PC-9 (cell line): ENCODE measurements at regions of chr17 and their contacts with region 1.

Region 1: DNA sequence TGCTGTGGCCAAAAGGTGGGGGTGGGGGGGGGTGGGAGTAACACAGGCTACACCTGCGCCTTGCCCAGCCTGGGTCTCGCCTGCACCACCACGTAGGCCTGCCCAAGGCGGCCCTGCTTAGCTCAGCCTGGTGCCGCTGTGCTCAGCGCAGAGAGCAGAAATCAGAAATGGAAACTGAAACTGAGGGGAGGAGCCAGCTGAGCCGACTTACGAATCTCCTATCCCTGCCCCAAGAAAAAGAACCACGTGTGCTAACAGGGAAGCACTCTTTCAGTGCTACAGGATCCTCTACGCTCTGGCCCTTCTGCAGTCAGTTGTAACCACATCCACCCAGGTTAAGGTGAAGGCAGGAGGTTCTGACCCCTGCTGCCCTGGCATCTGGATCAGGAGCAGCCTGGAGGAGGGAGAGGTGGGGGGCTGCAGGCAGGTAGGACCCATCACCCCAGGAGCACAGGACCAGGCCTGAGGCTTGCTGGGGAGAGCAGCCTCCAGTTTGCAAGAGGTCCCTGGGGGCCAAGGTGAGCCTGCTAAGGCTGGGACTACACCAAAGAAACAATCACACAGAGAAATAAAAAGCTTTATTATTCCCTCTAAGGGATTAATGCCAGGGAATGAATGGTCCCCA is at the start of gene DHX58:
- DNase-seq: peak; percentile 64 to 65
- H3K4me3 ChIP-seq: peak within 1 kb of the TSS; percentile 18; the same call in 1 of the 2 replicates
- H3K27ac ChIP-seq: no peak within 1 kb of the TSS
- H3K4me1 ChIP-seq: no peaks in the 10 kb centered on the region
- H3K27me3 ChIP-seq: no peaks in the 10 kb centered on the region
- CTCF ChIP-seq: no peak
- total RNA-seq, gene DHX58: 17.9 and 26.0 TPM in 2 replicates

Region 2: GRCh38 chr17:41811549-41812380 is 300.9 kb before region 1 on chr17 and contains the start of gene P3H4:
- CTCF ChIA-PET with region 1: interaction called, 10 read pairs
- POLR2A ChIA-PET with region 1: no interaction called
- intact Hi-C with region 1: no loop called
- DNase-seq: peak; percentile 40 to 82
- H3K4me3 ChIP-seq: peak within 1 kb of the TSS; percentile 94
- H3K27ac ChIP-seq: 0 out of 2 replicates have a peak within 1 kb of the TSS, but pooled peaks have one; percentile 22
- H3K4me1 ChIP-seq: peaks cover 27% of the 10 kb centered on the region
- H3K27me3 ChIP-seq: no peaks in the 10 kb centered on the region
- CTCF ChIP-seq: peak; percentile 53; the same call in 1 of the 2 replicates
- total RNA-seq, gene P3H4: 26.8 and 34.0 TPM in 2 replicates

Region 3: GRCh38 chr17:41918314-41919164 is 194.1 kb before region 1 on chr17 and contains the start of gene ACLY:
- CTCF ChIA-PET with region 1: interaction called, 17 read pairs
- POLR2A ChIA-PET with region 1: no interaction called
- intact Hi-C with region 1: no loop called
- DNase-seq: peak; percentile 93 to 98
- H3K4me3 ChIP-seq: peak within 1 kb of the TSS; percentile 98
- H3K27ac ChIP-seq: peak within 1 kb of the TSS; percentile 80
- H3K4me1 ChIP-seq: peaks cover 38% of the 10 kb centered on the region
- H3K27me3 ChIP-seq: no peaks in the 10 kb centered on the region
- CTCF ChIP-seq: no peak
- total RNA-seq, gene ACLY: 106 and 184 TPM in 2 replicates

Region 4: DNA sequence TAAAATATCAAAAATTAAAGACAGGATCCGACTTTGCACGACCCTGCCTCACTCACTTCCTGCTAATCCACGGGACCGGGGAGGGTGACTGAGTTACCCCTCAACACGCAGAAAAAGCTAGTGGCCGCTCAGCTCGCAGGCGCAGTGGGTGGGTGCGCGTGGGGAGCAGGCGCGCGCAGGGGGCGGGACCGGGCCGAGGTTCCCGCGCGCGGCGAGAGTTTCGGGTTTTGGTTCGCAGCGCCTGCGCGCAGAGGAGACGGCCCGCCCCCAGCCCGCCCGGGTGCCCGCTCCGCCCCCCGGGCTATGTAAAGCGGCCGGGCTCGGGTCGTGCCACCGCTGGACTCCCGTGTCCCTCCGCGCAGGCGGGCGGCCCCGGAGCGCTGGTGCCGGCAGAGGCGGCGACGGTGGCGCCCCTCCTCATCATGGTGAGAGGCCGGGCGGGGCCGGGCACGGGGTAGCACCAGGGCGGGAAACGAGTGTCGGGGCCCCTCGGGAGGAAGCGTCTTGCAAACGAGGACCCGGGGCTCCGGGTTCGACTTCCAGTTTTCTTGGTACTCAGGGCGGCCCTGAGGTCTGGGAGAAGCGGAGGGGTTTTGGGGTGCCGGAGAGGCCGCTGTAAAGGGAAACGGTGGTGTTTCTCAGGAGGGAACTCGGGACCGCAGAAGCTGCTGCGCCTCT is 146.1 kb before region 1 on chr17 and contains the start of gene CNP:
- CTCF ChIA-PET with region 1: interaction called, 4 read pairs
- POLR2A ChIA-PET with region 1: interaction called, 3 read pairs
- intact Hi-C with region 1: loop called (anchors 1 kb)
- DNase-seq: peak; percentile 69 to 90
- H3K4me3 ChIP-seq: peak within 1 kb of the TSS; percentile 78
- H3K27ac ChIP-seq: peak within 1 kb of the TSS; percentile 93
- H3K4me1 ChIP-seq: peaks cover 11% of the 10 kb centered on the region
- H3K27me3 ChIP-seq: no peaks in the 10 kb centered on the region
- CTCF ChIP-seq: no peak
- total RNA-seq, gene CNP: 60.6 and 64.7 TPM in 2 replicates

Region 5: DNA sequence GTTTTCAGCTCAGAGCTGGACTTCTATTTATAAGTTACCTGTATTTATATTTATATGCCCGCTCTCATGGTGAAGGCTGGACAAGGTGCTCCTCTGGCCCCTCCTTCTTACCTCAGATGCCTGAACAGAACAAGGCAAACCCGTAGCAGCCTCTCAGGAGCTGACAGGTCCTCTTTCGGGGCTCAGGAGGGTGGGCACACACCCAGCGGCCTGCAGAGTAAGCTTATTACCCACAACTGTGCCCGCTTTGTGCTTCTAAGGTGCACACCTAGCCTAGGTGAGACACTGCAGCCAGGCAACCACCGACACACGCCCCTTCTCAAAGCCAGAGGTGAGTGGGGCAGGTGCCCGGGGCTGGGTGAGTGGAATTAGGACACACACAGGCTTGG is 87.5 kb before region 1 on chr17:
- CTCF ChIA-PET with region 1: no interaction called
- POLR2A ChIA-PET with region 1: no interaction called
- intact Hi-C with region 1: loop called (anchors 1 kb)
- DNase-seq: no peak
- H3K4me3 ChIP-seq: no peak overlapping the region
- H3K27ac ChIP-seq: peak overlapping the region; percentile 61
- H3K4me1 ChIP-seq: peaks cover 36% of the 10 kb centered on the region
- H3K27me3 ChIP-seq: no peaks in the 10 kb centered on the region
- CTCF ChIP-seq: peak; percentile 19; the same call in 1 of the 2 replicates

Region 6: DNA sequence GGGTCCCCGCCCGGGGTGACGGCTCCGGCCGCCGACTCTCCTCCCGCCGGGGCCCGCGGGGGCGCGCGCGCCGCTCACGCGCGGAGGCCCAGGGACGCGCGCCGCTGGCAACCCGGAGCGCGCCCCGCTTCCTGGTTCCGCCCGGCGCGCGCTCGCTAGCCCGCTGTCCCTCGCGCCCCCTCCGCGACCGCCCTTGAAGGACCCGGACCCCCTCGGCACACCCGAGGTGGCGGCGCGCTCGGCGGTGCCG is 163.6 kb after region 1 on chr17 and contains the start of gene STAT5B:
- CTCF ChIA-PET with region 1: no interaction called
- POLR2A ChIA-PET with region 1: no interaction called
- intact Hi-C with region 1: no loop called
- DNase-seq: peak in 1 of 2 experiments; percentile 61
- H3K4me3 ChIP-seq: peak within 1 kb of the TSS; percentile 83
- H3K27ac ChIP-seq: peak within 1 kb of the TSS; percentile 66
- H3K4me1 ChIP-seq: peaks cover 24% of the 10 kb centered on the region
- H3K27me3 ChIP-seq: no peaks in the 10 kb centered on the region
- CTCF ChIP-seq: no peak
- total RNA-seq, gene STAT5B: 19.5 and 21.1 TPM in 2 replicates

Region 7: GRCh38 chr17:42527273-42527703 is 414.6 kb after region 1 on chr17:
- CTCF ChIA-PET with region 1: no interaction called
- POLR2A ChIA-PET with region 1: no interaction called
- intact Hi-C with region 1: loop called (anchors 2 kb)
- DNase-seq: peak; percentile 68 to 70
- H3K4me3 ChIP-seq: no peak overlapping the region
- H3K27ac ChIP-seq: no peak overlapping the region
- H3K4me1 ChIP-seq: peaks cover 9% of the 10 kb centered on the region
- H3K27me3 ChIP-seq: no peaks in the 10 kb centered on the region
- CTCF ChIP-seq: peak; percentile 89